PC-9 (cell line): ENCODE measurements at regions of chr10 and their contacts with region 1.

Region 1: GRCh38 chr10:32256613-32257437 is 90.1 kb downstream of the EPC1 start:
- DNase-seq: peak in 1 of 2 experiments; percentile 47
- H3K4me3 ChIP-seq: no peak overlapping the region
- H3K27ac ChIP-seq: no peak overlapping the region
- H3K4me1 ChIP-seq: peaks cover 19% of the 10 kb centered on the region
- H3K27me3 ChIP-seq: no peaks in the 10 kb centered on the region
- CTCF ChIP-seq: peak; percentile 71

Region 2: DNA sequence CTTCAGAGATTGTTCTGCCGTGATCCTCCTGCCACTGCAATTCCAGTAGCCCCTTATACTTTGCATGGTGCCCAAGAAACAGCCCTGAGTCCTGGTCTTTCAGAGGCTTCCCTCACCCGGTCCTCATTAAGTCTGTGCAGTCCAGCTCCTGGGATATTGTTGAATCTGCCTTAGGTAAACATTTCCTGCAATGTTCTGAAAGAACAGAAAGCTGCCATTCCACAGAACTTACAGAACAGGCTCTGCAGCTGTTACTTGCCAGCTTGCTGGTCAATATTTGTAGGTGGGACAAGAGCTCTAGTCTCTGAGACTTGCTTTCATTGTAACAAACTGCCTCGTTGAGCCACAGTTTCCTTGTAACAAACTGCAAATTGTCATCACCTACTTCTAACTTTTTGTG is 85.6 kb before region 1 on chr10:
- CTCF ChIA-PET with region 1: no interaction called
- POLR2A ChIA-PET with region 1: no interaction called
- intact Hi-C with region 1: no loop called
- DNase-seq: peak; percentile 47 to 79
- H3K4me3 ChIP-seq: peak overlapping the region; percentile 7; the same call in 1 of the 2 replicates
- H3K27ac ChIP-seq: peak overlapping the region; percentile 47
- H3K4me1 ChIP-seq: peaks cover 19% of the 10 kb centered on the region
- H3K27me3 ChIP-seq: no peaks in the 10 kb centered on the region
- CTCF ChIP-seq: no peak

Region 3: DNA sequence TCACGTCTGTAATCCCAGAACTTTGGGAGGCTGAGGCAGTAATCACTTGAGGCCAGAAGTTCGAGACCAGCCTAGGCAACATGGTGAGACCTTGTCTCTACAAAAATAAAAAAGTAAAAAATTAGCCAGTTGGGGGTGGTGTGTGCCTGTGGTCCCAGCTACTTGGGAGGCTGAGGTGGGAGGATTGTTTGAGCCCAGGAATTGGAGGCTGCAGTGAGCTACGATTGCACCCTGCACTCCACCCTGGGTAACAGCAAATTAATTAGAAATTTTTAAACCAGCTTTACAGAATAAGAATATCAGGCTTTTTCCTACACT is 45.8 kb before region 1 on chr10:
- CTCF ChIA-PET with region 1: no interaction called
- POLR2A ChIA-PET with region 1: no interaction called
- intact Hi-C with region 1: no loop called
- DNase-seq: no peak
- H3K4me3 ChIP-seq: no peak overlapping the region
- H3K27ac ChIP-seq: no peak overlapping the region
- H3K4me1 ChIP-seq: no peaks in the 10 kb centered on the region
- H3K27me3 ChIP-seq: no peaks in the 10 kb centered on the region
- CTCF ChIP-seq: no peak; the same call in 1 of the 2 replicates

Region 4: GRCh38 chr10:32225976-32226375 is 30.8 kb before region 1 on chr10:
- CTCF ChIA-PET with region 1: no interaction called
- POLR2A ChIA-PET with region 1: interaction called, 15 read pairs
- intact Hi-C with region 1: no loop called
- DNase-seq: no peak
- H3K4me3 ChIP-seq: no peak overlapping the region
- H3K27ac ChIP-seq: no peak overlapping the region
- H3K4me1 ChIP-seq: no peaks in the 10 kb centered on the region
- H3K27me3 ChIP-seq: no peaks in the 10 kb centered on the region
- CTCF ChIP-seq: no peak

Region 5: GRCh38 chr10:32245756-32246155 is 11.1 kb before region 1 on chr10:
- CTCF ChIA-PET with region 1: interaction called, 20 read pairs
- POLR2A ChIA-PET with region 1: no interaction called
- intact Hi-C with region 1: no loop called
- DNase-seq: no peak
- H3K4me3 ChIP-seq: no peak overlapping the region
- H3K27ac ChIP-seq: no peak overlapping the region
- H3K4me1 ChIP-seq: peaks cover 15% of the 10 kb centered on the region
- H3K27me3 ChIP-seq: no peaks in the 10 kb centered on the region
- CTCF ChIP-seq: no peak

Region 6: GRCh38 chr10:33819206-33819605 is 1562.4 kb after region 1 on chr10:
- CTCF ChIA-PET with region 1: no interaction called
- POLR2A ChIA-PET with region 1: no interaction called
- intact Hi-C with region 1: no loop called
- DNase-seq: no peak
- H3K4me3 ChIP-seq: no peak overlapping the region
- H3K27ac ChIP-seq: no peak overlapping the region
- H3K4me1 ChIP-seq: no peaks in the 10 kb centered on the region
- H3K27me3 ChIP-seq: no peaks in the 10 kb centered on the region
- CTCF ChIP-seq: no peak